ENCODE measurements at regions of chr16 and their contacts with region 1.

Region 1: DNA sequence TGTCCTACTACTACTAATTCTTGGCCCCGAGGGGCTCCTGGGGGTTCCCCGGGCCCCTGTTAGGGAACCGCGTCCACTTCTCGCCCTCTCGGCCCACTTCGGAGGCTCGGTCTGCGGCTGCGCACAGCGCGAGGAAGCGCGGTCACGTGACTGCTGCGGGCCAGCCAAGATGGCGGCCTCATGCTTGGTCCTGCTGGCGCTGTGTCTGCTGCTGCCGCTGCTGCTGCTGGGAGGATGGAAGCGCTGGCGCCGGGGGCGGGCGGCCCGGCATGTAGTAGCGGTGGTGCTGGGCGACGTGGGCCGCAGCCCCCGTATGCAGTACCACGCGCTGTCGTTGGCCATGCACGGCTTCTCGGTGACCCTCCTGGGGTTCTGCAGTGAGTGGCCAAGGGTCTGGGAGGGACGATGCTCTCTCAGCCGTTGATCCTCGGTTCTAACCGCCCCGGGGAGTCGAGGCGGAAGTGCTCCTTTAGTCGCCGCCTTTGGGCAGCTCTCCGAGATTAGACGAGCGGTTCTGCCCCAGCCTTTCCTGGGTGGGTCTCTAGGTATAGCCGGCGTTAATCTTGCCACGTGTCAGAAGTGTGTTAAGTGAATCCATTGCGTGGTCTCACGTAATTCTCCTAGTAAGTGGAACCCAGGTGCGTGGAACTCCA is at the start of gene ALG1:
- DNase-seq: peak; percentile 83 to 95 (median 87)
- ATAC-seq: peak; percentile 91
- H3K4me3 ChIP-seq: peak within 1 kb of the TSS; percentile 78
- H3K4me3 Mint-ChIP-seq: peak within 1 kb of the TSS; percentile 97
- H3K27ac ChIP-seq: peak within 1 kb of the TSS; percentile 83 to 91
- H3K27ac Mint-ChIP-seq: peak within 1 kb of the TSS; percentile 96
- H3K4me1 ChIP-seq: peaks cover 24% of the 10 kb centered on the region
- H3K4me1 Mint-ChIP-seq: peaks cover 35% of the 10 kb centered on the region
- H3K27me3 ChIP-seq: no peaks in the 10 kb centered on the region
- H3K27me3 Mint-ChIP-seq: no peaks in the 10 kb centered on the region
- CTCF ChIP-seq: no peak
- total RNA-seq, gene ALG1: 8.9 to 9.0 TPM

Region 2: GRCh38 chr16:4957720-4958509 is 113.9 kb before region 1 on chr16 and contains the start of gene SEC14L5:
- CTCF ChIA-PET with region 1: no interaction called
- POLR2A ChIA-PET with region 1: no interaction called
- intact Hi-C with region 1: loop called in 1 of 2 experiments (anchors 5 kb)
- DNase-seq: peak; percentile 79 to 95 (median 89)
- ATAC-seq: peak; percentile 93
- H3K4me3 ChIP-seq: peak within 1 kb of the TSS; percentile 52
- H3K4me3 Mint-ChIP-seq: peak within 1 kb of the TSS; percentile 86
- H3K27ac ChIP-seq: no peak within 1 kb of the TSS
- H3K27ac Mint-ChIP-seq: no peak within 1 kb of the TSS
- H3K4me1 ChIP-seq: peaks cover 26% of the 10 kb centered on the region
- H3K4me1 Mint-ChIP-seq: peaks cover 24% of the 10 kb centered on the region
- H3K27me3 ChIP-seq: peaks cover 13 to 16% of the 10 kb centered on the region in 2 experiments
- H3K27me3 Mint-ChIP-seq: peaks cover 53% of the 10 kb centered on the region
- CTCF ChIP-seq: no peak
- total RNA-seq, gene SEC14L5: not detected

Region 3: DNA sequence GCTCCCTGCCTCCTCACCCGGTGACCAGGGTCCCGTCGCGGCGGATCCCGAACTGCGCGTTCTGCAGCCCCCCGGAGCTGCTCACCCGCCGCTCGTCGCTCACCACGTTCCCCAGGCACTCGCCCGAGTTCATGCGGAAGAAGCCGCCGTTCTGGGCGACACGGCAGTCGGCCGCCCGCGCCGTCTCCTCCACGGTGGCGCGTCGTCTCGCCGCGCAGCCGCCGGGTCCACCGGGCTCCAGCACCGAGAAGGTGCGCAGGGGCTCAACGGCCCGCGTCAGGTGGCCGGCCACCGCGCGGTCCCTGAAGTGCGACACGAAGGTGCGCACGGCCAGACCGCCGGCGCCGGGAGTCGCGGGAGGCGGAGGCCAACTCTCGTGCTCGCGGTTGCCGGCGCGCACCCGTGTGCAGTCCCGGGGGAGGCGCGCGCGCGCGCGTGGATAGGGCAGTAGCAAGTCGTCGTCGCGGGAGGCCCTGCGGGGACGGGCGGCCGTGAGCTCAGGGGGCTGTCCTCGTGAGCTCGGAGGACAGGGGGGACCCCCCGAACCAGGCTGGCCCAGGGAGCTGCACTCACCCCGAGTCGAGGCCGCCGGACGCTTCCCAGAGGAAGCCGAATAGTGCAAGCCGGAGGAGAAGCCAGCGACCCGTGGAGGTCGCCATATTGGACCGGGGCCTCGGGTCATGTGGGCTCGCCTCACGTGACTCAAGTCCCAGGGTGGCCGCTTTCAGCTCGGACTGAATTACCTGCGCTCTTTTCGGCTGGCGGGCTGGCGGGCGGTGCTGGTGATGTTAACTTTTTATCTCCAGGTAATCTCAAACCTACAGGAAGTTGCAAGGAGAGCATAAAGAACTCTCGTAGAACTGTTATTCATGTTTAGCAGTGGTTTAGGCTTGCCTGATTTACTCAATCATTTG is 38.3 kb before region 1 on chr16 and contains the start of gene NAGPA:
- CTCF ChIA-PET with region 1: no interaction called
- POLR2A ChIA-PET with region 1: interaction called, 25 read pairs
- intact Hi-C with region 1: loop called in 1 of 2 experiments (anchors 1 kb)
- DNase-seq: peak; percentile 72 to 90 (median 80)
- ATAC-seq: peak; percentile 90
- H3K4me3 ChIP-seq: peak within 1 kb of the TSS; percentile 73
- H3K4me3 Mint-ChIP-seq: peak within 1 kb of the TSS; percentile 86
- H3K27ac ChIP-seq: peak within 1 kb of the TSS; percentile 39 to 68
- H3K27ac Mint-ChIP-seq: peak within 1 kb of the TSS; percentile 84
- H3K4me1 ChIP-seq: peaks cover 19% of the 10 kb centered on the region
- H3K4me1 Mint-ChIP-seq: peaks cover 20% of the 10 kb centered on the region
- H3K27me3 ChIP-seq: no peaks in the 10 kb centered on the region
- H3K27me3 Mint-ChIP-seq: no peaks in the 10 kb centered on the region
- CTCF ChIP-seq: no peak
- total RNA-seq, gene NAGPA: 30.0 to 34.0 TPM